ENCODE measurements at regions of chr20 and their contacts with region 1.

Region 1: DNA sequence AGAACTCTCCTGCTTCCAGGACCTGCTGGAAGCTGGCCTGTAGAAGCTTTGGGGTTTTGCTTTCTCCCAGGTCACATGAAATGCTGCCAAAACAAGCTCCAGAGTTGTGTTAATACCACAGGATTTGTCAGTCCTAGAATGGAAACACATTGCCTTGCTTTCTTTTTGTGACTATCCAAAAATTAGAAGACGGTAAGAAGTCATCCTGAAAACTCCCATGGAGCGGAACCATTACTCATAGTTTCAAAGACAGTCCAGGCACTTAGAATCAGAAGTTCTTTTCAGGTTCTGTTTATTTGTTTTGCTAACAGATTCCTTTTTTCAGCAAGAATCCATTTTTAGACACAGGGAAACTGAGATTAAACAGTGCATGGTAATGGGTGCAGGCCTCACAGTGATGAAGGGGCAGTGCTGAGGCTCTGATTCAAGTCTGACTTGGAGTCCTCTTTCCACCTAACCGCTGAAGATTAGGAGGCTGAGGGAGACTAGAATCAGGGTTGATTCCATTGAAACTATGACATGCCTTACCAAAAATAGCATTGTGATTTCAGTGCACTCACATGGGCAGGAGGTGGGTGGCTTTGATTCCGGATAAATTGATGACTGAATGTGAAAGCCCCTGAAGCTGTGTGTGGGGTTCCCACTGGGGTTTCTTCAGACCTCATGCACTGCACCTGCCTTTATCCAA is 72.2 kb upstream of the NAA20 start:
- DNase-seq: no peak
- H3K4me3 Mint-ChIP-seq: no peak overlapping the region
- H3K27ac Mint-ChIP-seq: no peak overlapping the region
- H3K4me1 Mint-ChIP-seq: no peaks in the 10 kb centered on the region
- H3K27me3 Mint-ChIP-seq: peaks cover 4% of the 10 kb centered on the region

Region 2: DNA sequence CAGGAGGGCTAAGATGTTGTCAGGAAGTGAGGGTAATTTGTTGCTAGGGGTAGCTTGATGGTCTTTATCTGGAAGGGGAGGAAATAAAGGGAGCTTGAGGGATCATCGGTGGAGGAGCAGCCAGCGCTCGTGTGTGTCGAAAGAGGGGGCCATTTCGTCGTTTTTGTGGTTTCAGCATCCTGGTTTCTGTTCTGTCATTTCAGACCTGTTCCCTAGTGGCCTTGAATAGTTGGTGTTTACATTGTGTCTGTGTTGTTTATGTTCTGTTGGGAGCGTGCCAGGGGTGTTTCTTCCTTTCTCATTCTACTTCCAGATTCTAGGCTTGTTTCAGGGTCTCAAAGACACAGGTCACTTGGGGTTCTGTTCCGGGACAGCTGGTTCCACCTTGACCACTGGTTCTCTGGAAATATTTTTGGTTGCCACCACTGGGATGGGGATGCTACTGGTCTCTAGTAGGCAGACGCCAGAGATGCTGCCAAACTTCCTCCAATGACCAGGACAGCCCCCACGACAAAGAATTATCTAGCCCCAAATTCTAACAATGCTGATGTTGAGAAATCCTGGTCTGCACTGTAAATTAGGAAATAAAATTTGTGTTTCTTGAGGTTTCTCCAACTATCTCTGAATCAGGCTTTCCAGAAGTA is 41.6 kb before region 1 on chr20:
- intact Hi-C with region 1: no loop called
- DNase-seq: no peak
- H3K4me3 Mint-ChIP-seq: no peak overlapping the region
- H3K27ac Mint-ChIP-seq: no peak overlapping the region
- H3K4me1 Mint-ChIP-seq: peaks cover 5% of the 10 kb centered on the region
- H3K27me3 Mint-ChIP-seq: peaks cover 7% of the 10 kb centered on the region

Region 3: DNA sequence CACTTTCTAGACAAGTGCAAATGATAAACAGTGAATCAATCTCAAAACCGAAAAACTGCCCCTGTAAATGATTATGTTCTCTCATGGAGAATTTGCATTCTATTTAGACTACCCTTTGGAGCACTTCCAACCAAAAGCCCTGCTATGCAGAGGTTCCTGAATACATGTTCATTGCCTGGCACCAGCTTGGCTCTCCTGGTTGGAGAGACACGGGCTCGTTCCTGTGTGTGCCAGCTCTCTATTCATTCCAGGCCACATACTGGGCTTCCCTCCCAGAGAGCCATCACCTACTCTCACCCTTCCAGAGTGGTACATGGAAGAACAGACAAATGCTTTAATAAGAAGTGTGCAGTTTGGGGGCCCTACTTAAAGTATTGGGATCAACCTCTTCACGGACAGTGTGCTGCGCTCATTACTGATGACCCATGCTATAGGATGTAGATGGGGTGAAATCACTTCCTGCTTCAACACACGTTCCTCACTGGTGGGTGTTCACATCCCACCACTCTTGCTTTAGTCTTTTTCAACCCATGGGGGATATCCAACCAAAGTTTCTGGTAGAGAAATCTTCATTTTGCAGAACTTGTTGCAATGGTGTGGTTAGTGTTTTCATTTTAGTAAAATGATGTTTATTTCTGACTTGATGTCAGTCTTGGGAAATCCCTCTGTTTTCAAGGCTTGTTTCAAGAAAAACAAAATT is 33.7 kb after region 1 on chr20:
- intact Hi-C with region 1: loop called (anchors 2 kb)
- DNase-seq: no peak
- H3K4me3 Mint-ChIP-seq: no peak overlapping the region
- H3K27ac Mint-ChIP-seq: no peak overlapping the region
- H3K4me1 Mint-ChIP-seq: no peaks in the 10 kb centered on the region
- H3K27me3 Mint-ChIP-seq: peaks cover 9% of the 10 kb centered on the region